ENCODE measurements at regions of chr14 and their contacts with region 1.

Region 1: GRCh38 chr14:24431569-24432258 is 2.0 kb downstream of the KHNYN start:
- DNase-seq: peak; percentile 95
- ATAC-seq: peak; percentile 71
- H3K4me3 Mint-ChIP-seq: peak overlapping the region; percentile 93
- H3K27ac Mint-ChIP-seq: peak overlapping the region; percentile 96
- H3K4me1 Mint-ChIP-seq: peaks cover 60% of the 10 kb centered on the region
- H3K27me3 Mint-ChIP-seq: no peaks in the 10 kb centered on the region

Region 2: DNA sequence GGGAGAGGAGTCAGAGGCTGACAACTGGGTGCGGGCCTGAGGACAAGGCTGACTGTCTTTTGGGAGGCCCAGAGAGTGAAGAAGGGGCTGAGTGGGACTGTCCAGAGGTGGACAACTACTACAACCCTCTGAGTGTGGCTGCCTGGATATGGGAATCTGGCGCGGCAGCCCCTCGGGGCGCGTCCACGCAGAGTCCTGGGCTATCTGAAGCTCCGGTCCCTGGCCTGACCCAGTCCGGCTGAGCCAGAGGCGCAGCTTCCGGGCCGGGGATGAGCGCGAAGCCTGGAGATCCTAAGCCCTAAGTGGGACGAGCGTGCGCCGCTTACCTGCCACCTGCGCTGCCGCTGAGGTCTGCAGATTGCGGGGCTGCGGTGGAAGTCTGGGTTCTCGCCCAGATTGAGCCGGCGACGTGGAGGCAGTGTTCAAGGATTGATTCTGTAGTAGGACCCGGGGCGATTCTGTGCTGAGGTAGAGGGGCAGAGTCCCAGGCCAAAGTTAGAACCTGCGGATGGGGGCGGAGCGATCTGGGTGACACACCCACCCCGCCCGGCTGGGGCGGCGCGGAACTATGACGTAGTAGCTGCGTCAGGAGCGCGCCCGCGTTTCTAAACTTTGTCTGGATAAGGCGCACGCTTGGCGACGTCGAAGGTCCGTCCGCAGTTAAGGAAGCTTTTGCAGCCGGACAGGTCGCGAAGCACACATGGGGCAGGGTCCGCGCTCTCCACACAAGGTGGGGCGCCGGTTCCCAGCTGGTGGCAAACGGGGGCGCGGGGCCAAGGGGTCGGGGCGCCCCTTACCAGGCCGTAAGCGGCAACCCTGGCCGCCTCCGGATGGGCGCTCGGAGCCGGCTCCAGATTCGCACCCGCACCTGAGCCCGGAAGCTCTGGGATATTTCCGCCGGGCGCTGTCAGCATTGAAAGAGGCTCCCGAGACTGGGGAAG is 132.2 kb before region 1 on chr14 and contains the starts of genes DHRS1 and NOP9:
- CTCF ChIA-PET with region 1: interaction called, 13 read pairs
- POLR2A ChIA-PET with region 1: interaction called, 9 read pairs
- DNase-seq: peak; percentile 94
- ATAC-seq: peak; percentile 83
- H3K4me3 Mint-ChIP-seq: peak within 1 kb of the TSS; percentile 91
- H3K27ac Mint-ChIP-seq: peak within 1 kb of the TSS; percentile 91
- H3K4me1 Mint-ChIP-seq: peaks cover 53% of the 10 kb centered on the region
- H3K27me3 Mint-ChIP-seq: no peaks in the 10 kb centered on the region
- total RNA-seq, gene DHRS1: 28.6 to 33.9 TPM
- total RNA-seq, gene NOP9: 35.2 to 36.7 TPM

Region 3: GRCh38 chr14:24324024-24324423 is 107.7 kb before region 1 on chr14:
- CTCF ChIA-PET with region 1: interaction called, 42 read pairs
- POLR2A ChIA-PET with region 1: interaction called, 185 read pairs
- DNase-seq: no peak
- ATAC-seq: no peak
- H3K4me3 Mint-ChIP-seq: no peak overlapping the region
- H3K27ac Mint-ChIP-seq: no peak overlapping the region
- H3K4me1 Mint-ChIP-seq: peaks cover 29% of the 10 kb centered on the region
- H3K27me3 Mint-ChIP-seq: peaks cover 14% of the 10 kb centered on the region

Region 4: GRCh38 chr14:24366721-24367513 is 64.8 kb before region 1 on chr14:
- CTCF ChIA-PET with region 1: interaction called, 38 read pairs
- POLR2A ChIA-PET with region 1: interaction called, 17 read pairs
- DNase-seq: no peak
- ATAC-seq: peak; percentile 25
- H3K4me3 Mint-ChIP-seq: peak overlapping the region; percentile 12
- H3K27ac Mint-ChIP-seq: no peak overlapping the region
- H3K4me1 Mint-ChIP-seq: peaks cover 31% of the 10 kb centered on the region
- H3K27me3 Mint-ChIP-seq: peaks cover 50% of the 10 kb centered on the region

Region 5: GRCh38 chr14:24406416-24406815 is 25.3 kb before region 1 on chr14:
- CTCF ChIA-PET with region 1: interaction called, 18 read pairs
- POLR2A ChIA-PET with region 1: interaction called, 10 read pairs
- DNase-seq: no peak
- ATAC-seq: no peak
- H3K4me3 Mint-ChIP-seq: no peak overlapping the region
- H3K27ac Mint-ChIP-seq: no peak overlapping the region
- H3K4me1 Mint-ChIP-seq: no peaks in the 10 kb centered on the region
- H3K27me3 Mint-ChIP-seq: peaks cover 34% of the 10 kb centered on the region

Region 6: GRCh38 chr14:24442273-24443052 is 10.7 kb after region 1 on chr14 and contains the start of gene SDR39U1:
- CTCF ChIA-PET with region 1: interaction called, 77 read pairs
- POLR2A ChIA-PET with region 1: interaction called, 77 read pairs
- DNase-seq: peak; percentile 99
- ATAC-seq: peak; percentile 91
- H3K4me3 Mint-ChIP-seq: peak within 1 kb of the TSS; percentile 96
- H3K27ac Mint-ChIP-seq: peak within 1 kb of the TSS; percentile 98
- H3K4me1 Mint-ChIP-seq: peaks cover 53% of the 10 kb centered on the region
- H3K27me3 Mint-ChIP-seq: no peaks in the 10 kb centered on the region
- total RNA-seq, gene SDR39U1: 47.6 to 58.6 TPM

Region 7: GRCh38 chr14:24463017-24463883 is 31.5 kb after region 1 on chr14:
- CTCF ChIA-PET with region 1: no interaction called
- POLR2A ChIA-PET with region 1: no interaction called
- DNase-seq: no peak
- ATAC-seq: no peak
- H3K4me3 Mint-ChIP-seq: no peak overlapping the region
- H3K27ac Mint-ChIP-seq: no peak overlapping the region
- H3K4me1 Mint-ChIP-seq: peaks cover 8% of the 10 kb centered on the region
- H3K27me3 Mint-ChIP-seq: peaks cover 4% of the 10 kb centered on the region

Measured in activated CD8-positive, alpha-beta T cell treated with anti-CD3 and anti-CD28 coated beads, Interleukin-2, amount 10 ng/mL, durations not matched to agents 7 days and 5 days (primary cell).